ENCODE measurements at regions of chr15 and their contacts with region 1.

Region 1: DNA sequence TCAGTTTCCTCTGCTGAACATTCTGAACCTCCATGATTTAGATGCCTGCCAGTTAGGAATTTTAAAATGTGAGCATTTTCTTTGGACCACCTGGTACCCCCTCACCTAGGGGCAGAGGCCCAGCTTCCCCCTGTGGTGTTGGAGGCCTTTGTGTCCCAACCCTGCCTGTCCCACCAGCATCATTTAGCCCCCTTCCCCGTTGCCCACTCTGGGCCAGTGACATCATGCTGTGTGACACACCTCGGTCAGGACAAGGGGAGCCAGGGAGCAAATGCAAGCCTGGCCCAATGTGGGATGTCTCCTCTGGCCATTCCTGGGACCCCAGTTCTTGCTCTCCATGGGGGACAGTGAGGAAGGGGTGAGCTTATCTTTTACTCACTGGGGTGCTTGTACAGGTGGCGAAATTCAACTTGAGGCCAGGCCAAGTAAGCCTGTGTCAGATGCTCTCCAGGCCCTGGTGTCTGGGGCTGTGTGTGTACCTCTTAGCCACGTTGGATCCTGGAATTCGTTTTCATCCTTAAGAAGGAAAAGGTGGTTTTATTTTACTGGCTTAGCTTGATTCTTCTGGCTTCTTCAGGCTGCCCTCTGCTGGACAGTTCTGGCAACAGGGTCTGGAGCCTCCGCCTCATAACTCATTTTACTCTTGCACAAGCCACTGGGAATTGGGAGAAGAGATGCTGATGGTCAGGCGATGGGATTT is 49.7 kb upstream of the MYZAP start:
- DNase-seq: peak; percentile 68
- H3K4me3 ChIP-seq: peak overlapping the region in 1 of 2 experiments; percentile 17; a peak in 1 of 4 replicates
- H3K27ac ChIP-seq: no peak overlapping the region
- H3K4me1 ChIP-seq: peaks cover 2 to 11% of the 10 kb centered on the region in 2 experiments; a peak in 2 of 4 replicates
- H3K27me3 ChIP-seq: no peaks in the 10 kb centered on the region
- CTCF ChIP-seq: peak; percentile 91
- EP300 ChIP-seq: no peak
- RAD21 ChIP-seq: peak; percentile 72

Region 2: DNA sequence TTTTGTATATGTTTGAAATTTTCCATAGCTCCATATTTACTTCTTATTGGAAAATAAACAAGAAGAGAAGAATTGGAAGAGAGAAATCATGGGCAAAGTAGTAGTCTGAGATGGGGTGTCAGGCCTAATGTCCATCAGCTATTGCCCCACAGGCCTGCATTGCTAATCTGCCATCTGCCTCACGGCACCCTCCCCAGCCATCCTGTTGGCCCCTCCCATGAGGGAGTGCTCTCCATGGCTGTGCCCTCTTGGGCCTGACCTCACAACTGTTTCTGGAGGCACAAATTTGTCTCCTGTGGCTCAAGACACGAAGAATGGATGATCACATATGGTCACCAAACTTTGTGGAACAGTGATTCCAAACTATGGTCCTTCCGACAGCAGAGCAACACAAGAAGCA is 193.2 kb before region 1 on chr15:
- CTCF ChIA-PET with region 1: interaction called, 191 read pairs
- POLR2A ChIA-PET with region 1: no interaction called
- DNase-seq: no peak
- H3K4me3 ChIP-seq: no peak overlapping the region
- H3K27ac ChIP-seq: no peak overlapping the region
- H3K4me1 ChIP-seq: no peaks in the 10 kb centered on the region; a peak in 1 of 4 replicates
- H3K27me3 ChIP-seq: no peaks in the 10 kb centered on the region
- CTCF ChIP-seq: no peak
- EP300 ChIP-seq: no peak
- RAD21 ChIP-seq: no peak

Region 3: GRCh38 chr15:57516327-57517031 is 25.5 kb before region 1 on chr15:
- CTCF ChIA-PET with region 1: interaction called, 16 read pairs
- POLR2A ChIA-PET with region 1: no interaction called
- DNase-seq: no peak
- H3K4me3 ChIP-seq: no peak overlapping the region
- H3K27ac ChIP-seq: no peak overlapping the region
- H3K4me1 ChIP-seq: peaks cover 0 to 4% of the 10 kb centered on the region in 2 experiments; a peak in 1 of 4 replicates
- H3K27me3 ChIP-seq: no peaks in the 10 kb centered on the region
- CTCF ChIP-seq: no peak
- EP300 ChIP-seq: no peak
- RAD21 ChIP-seq: no peak

Region 4: GRCh38 chr15:57522148-57522547 is 19.8 kb before region 1 on chr15:
- CTCF ChIA-PET with region 1: interaction called, 97 read pairs
- POLR2A ChIA-PET with region 1: no interaction called
- DNase-seq: no peak
- H3K4me3 ChIP-seq: no peak overlapping the region
- H3K27ac ChIP-seq: no peak overlapping the region
- H3K4me1 ChIP-seq: peaks cover 0 to 14% of the 10 kb centered on the region in 2 experiments; a peak in 1 of 4 replicates
- H3K27me3 ChIP-seq: no peaks in the 10 kb centered on the region
- CTCF ChIP-seq: no peak
- EP300 ChIP-seq: no peak
- RAD21 ChIP-seq: no peak

Region 5: DNA sequence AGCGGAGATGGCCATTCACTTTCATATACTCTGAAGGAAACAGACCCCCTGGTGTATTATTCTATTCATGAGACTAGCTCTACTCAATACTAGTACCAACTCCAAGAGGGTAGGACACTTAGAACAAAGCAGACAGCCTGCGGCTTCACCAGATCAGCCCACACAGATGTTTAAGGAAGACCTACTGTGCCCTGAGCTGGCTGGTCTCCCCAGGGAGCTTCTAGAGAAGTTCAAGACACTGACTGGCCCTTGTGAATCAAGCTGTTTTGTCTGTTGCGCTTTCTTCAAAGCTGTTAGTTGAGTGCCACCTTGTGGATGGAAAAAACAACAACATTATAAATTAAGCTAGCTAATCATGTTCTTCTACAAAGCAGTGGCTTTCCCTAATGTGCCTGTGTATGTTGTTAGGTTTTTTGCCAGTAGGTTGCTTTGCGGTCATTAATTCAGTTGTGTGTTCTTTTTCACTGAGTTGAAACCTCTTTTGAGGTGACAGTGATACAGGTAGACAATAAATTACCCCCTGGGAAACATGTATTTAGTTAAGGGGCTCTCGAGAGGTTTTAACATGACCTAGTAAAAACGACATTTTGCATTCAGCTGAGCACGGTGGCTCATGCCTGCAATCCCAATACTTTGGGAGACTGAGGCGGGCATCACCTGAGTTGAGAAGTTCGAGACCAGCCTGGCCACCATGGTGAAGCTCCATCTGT is 14.4 kb before region 1 on chr15:
- CTCF ChIA-PET with region 1: interaction called, 97 read pairs
- POLR2A ChIA-PET with region 1: no interaction called
- DNase-seq: peak; percentile 51
- H3K4me3 ChIP-seq: no peak overlapping the region
- H3K27ac ChIP-seq: no peak overlapping the region
- H3K4me1 ChIP-seq: peaks cover 0 to 10% of the 10 kb centered on the region in 2 experiments; a peak in 1 of 4 replicates
- H3K27me3 ChIP-seq: no peaks in the 10 kb centered on the region
- CTCF ChIP-seq: peak; percentile 71
- EP300 ChIP-seq: no peak
- RAD21 ChIP-seq: peak; percentile 95

Measured in SK-N-SH (cell line).